Right ventricle myocardium superior (tissue), 1 donor: ENCODE measurements at regions of chr7 and their contacts with region 1.

Region 1: GRCh38 chr7:117750612-117751563 is 122.4 kb downstream of the CTTNBP2 start:
- DNase-seq: no peak
- ATAC-seq: peak; percentile 43

Region 2: GRCh38 chr7:117873310-117874190 is 122.7 kb after region 1 on chr7 and contains the start of gene CTTNBP2:
- intact Hi-C with region 1: loop called (anchors 10 kb)
- DNase-seq: peak; percentile 79
- ATAC-seq: peak; percentile 93
- total RNA-seq, gene CTTNBP2: 2.0 TPM